Left ventricle myocardium superior (tissue), 1 donor: ENCODE measurements at regions of chr3 and their contacts with region 1.

Region 1: DNA sequence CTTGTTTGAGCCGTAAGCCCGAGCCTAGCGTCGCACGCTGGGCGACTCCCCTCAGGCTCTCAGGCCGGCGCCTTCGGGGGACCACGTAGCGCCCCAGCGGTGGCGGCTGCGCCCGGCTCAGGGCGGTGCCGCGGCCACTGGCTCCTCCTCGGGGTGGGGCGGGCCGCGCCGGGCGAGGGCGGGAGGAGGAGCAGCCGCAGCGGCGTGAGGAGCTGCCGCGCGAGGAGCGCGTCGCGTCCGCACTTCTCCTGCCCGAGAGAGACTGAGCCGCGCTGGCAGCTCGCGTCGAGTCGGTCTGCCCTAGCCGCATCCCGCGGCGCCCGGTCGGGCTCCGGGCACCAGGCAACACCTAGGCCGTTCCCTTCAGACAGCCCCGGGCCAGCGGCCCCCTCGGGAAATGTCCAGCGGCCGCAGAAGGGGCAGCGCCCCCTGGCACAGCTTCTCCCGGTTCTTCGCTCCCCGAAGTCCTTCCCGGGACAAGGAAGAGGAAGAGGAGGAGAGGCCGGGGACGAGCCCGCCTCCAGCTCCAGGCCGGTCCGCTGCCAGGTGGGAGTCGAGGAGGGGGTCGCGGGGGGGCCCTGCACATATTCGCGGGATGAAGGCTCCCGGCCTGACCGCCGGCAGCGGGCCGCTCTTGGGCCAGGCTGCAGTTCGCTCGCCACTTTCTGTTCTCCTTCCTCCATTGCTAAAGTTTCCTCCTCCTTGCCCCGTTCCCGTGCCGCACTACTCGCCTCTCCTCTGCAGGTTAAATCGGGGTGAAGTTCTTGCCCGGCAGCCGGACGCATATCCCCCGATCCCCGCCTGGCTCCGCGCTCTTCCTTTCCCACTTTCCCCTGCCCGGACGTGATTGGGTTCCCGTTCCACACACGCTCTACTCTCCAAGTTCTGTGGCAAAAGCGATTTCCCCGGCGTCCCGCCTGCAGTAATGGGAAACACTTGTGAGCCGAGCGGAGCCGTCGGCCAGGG is at the start of gene CRYBG3:
- DNase-seq: peak; percentile 93
- ATAC-seq: peak; percentile 99
- total RNA-seq, gene CRYBG3: 20.4 TPM

Region 2: DNA sequence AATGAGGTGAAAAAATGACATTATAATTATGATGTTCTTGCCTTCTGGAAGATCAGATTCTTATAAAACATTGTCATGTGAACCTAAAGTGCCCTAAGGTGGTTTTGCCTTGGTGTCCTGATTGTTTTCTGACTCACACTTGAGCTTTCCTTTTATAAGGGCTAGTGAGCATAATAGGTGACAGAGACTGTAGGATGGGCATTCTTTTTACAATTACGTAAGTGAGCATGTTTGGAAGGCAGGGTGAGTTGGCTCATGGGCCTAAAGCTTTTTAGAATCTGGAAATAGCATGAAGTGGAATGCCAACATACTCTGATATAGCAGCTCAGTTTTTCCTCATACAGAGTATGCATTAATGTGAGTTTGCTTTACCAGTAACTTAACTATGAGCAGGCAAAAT is 40.9 kb after region 1 on chr3:
- intact Hi-C with region 1: loop called (anchors 5 kb)
- DNase-seq: no peak
- ATAC-seq: peak; percentile 96

Region 3: DNA sequence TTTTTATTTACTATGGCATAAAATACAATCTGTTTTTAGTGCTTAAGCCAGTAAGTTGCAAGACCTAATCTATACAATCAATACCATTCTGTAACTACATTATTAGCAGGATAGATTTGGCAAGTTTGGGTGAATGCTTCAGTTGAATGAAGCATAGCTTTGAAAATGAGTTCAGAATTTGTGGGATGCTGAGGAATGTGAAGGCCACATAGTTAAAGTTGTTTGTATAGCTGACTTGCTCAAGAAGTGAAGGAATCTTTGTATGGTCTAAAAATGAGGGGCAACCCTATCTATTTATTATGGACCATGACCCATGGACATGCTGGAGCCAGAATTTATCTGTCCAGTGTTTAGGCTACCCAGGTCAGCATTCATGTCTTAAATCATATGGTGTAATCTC is 58.2 kb after region 1 on chr3:
- intact Hi-C with region 1: no loop called
- DNase-seq: no peak
- ATAC-seq: no peak

Region 4: GRCh38 chr3:97910931-97911351 is 88.8 kb after region 1 on chr3:
- intact Hi-C with region 1: loop called (anchors 10 kb)
- DNase-seq: peak; percentile 24
- ATAC-seq: peak; percentile 89